WTC11 (cell line): ENCODE measurements at regions of chr3 and their contacts with region 1.

Region 1: GRCh38 chr3:23888617-23889228 is 28.1 kb downstream of the NKIRAS1 start:
- DNase-seq: no peak
- ATAC-seq: no peak
- H3K4me3 Mint-ChIP-seq: no peak overlapping the region
- H3K27ac Mint-ChIP-seq: no peak overlapping the region
- H3K4me1 Mint-ChIP-seq: peaks cover 22% of the 10 kb centered on the region
- H3K27me3 Mint-ChIP-seq: no peaks in the 10 kb centered on the region
- CTCF ChIP-seq: 0 out of 2 replicates have a peak, but pooled peaks have one; percentile 42

Region 2: DNA sequence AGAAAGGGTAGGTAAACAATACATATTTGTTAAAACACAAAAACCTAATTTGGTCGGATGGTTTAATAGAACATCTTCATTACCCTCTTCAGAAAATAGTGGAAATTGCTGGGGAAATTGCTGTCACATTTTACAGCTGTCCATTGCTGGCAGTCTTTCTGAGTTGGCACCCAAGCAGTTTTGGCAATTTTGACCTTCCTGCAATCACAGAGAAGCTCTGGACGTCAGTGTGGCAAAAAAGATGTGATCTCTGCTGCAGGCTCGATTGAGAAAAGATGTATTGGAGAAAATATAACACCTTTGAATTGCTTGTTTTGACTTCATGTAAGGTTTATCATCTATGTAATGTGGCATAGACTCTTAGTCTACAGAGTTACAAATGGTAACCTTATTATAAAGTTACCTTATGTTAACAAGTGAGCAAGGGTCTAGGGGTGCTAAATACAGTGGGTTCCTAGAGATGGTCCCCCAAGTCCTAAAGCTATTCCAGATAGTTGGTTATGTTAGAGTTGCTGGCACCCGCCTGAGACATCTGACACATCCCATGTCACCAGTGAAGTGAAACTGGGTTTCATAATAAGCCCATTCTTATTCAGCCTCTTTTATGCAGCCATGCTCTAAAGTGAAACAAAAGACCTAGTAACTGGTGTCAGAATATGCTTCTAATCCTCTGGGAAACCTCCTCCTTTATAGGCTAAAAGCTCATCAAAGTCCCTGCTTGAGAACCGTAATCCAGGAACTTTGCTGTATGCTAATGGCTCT is 68.9 kb before region 1 on chr3:
- CTCF ChIA-PET with region 1: no interaction called
- POLR2A ChIA-PET with region 1: no interaction called
- DNase-seq: no peak
- ATAC-seq: no peak
- H3K4me3 Mint-ChIP-seq: no peak overlapping the region
- H3K27ac Mint-ChIP-seq: no peak overlapping the region
- H3K4me1 Mint-ChIP-seq: peaks cover 70% of the 10 kb centered on the region
- H3K27me3 Mint-ChIP-seq: no peaks in the 10 kb centered on the region
- CTCF ChIP-seq: no peak

Region 3: GRCh38 chr3:23874359-23875112 is 14.2 kb before region 1 on chr3:
- CTCF ChIA-PET with region 1: interaction called, 12 read pairs
- POLR2A ChIA-PET with region 1: no interaction called
- DNase-seq: no peak
- ATAC-seq: no peak
- H3K4me3 Mint-ChIP-seq: no peak overlapping the region
- H3K27ac Mint-ChIP-seq: no peak overlapping the region
- H3K4me1 Mint-ChIP-seq: peaks cover 28% of the 10 kb centered on the region
- H3K27me3 Mint-ChIP-seq: no peaks in the 10 kb centered on the region; the same call in 1 of the 2 replicates
- CTCF ChIP-seq: no peak

Region 4: DNA sequence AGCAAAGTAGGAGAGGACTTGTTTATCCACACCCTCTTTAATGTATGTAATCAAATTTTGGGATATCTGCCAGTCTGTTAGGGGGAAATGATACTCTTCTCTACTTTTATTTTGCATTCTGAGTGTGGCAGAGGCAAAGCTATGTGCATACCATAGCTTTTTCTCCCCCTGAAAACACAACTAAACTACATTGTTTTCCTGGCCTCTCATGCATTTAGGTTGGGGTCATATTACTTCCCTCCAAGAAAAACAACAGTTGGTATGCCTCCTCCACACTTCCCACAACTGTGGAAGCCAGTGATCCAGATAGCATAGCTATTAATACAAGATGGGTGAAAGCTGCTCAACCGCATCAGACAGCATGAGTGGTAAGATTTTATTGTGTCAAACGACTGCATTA is 35.1 kb after region 1 on chr3:
- CTCF ChIA-PET with region 1: no interaction called
- POLR2A ChIA-PET with region 1: no interaction called
- DNase-seq: no peak
- ATAC-seq: peak; percentile 28
- H3K4me3 Mint-ChIP-seq: no peak overlapping the region
- H3K27ac Mint-ChIP-seq: peak overlapping the region; percentile 67; the same call in 1 of the 2 replicates
- H3K4me1 Mint-ChIP-seq: peaks cover 30% of the 10 kb centered on the region
- H3K27me3 Mint-ChIP-seq: no peaks in the 10 kb centered on the region
- CTCF ChIP-seq: no peak

Region 5: GRCh38 chr3:23987356-23987755 is 98.6 kb after region 1 on chr3:
- CTCF ChIA-PET with region 1: no interaction called
- POLR2A ChIA-PET with region 1: no interaction called
- DNase-seq: no peak
- ATAC-seq: no peak
- H3K4me3 Mint-ChIP-seq: no peak overlapping the region
- H3K27ac Mint-ChIP-seq: no peak overlapping the region
- H3K4me1 Mint-ChIP-seq: peaks cover 9% of the 10 kb centered on the region
- H3K27me3 Mint-ChIP-seq: no peaks in the 10 kb centered on the region; the same call in 1 of the 2 replicates
- CTCF ChIP-seq: no peak